Aorta (tissue), 5 donors: ENCODE measurements at regions of chr6 and their contacts with region 1.

Region 1: DNA sequence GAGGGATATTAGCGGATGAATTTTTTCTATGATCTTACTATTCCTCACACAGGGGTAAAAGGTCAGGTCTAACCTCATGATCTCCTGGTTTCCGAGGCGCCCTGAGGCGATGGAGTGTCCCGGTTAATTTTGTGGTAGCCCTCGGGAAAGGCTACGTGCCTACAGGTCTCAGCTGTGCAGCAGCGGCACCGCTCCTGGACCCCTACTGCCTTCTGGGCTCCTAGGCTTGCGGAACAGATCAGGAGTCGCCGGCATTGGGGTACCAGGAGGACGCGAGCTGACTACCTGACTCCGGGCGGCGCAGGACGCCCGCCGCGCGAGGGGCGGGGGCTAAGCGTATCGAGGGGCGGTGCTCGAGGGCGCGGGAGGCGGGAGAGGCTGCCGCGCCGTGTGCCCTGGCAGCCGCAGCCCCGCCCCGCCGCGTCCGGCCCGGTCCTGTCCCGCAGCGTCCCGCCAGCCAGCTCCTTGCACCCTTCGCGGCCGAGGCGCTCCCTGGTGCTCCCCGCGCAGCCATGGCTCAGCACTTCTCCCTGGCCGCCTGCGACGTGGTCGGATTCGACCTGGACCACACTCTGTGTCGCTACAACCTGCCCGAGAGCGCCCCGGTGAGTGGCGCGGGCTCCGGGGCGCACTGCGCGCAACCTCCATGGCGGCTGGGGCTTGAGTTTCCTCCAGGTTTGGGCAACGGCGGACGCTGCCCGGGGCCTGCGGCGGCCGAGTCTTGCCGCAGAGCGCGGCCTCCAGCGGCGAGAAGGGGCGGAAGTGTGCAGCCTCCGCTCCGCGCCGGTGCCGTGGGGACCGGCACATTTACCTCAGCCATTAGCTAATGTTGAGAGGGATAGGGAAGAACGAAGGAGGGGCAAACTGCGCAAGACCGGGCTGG is at the start of gene NT5DC1:
- DNase-seq: peak; percentile 91 to 95
- ATAC-seq: peak; percentile 96
- H3K4me3 ChIP-seq: peak within 1 kb of the TSS; percentile 74 to 92
- H3K27ac ChIP-seq: peak within 1 kb of the TSS; percentile 89 to 93
- H3K4me1 ChIP-seq: peaks cover 4 to 8% of the 10 kb centered on the region in 2 donors
- H3K27me3 ChIP-seq: no peaks in the 10 kb centered on the region
- total RNA-seq, gene NT5DC1: 42.9 to 47.5 TPM

Region 2: DNA sequence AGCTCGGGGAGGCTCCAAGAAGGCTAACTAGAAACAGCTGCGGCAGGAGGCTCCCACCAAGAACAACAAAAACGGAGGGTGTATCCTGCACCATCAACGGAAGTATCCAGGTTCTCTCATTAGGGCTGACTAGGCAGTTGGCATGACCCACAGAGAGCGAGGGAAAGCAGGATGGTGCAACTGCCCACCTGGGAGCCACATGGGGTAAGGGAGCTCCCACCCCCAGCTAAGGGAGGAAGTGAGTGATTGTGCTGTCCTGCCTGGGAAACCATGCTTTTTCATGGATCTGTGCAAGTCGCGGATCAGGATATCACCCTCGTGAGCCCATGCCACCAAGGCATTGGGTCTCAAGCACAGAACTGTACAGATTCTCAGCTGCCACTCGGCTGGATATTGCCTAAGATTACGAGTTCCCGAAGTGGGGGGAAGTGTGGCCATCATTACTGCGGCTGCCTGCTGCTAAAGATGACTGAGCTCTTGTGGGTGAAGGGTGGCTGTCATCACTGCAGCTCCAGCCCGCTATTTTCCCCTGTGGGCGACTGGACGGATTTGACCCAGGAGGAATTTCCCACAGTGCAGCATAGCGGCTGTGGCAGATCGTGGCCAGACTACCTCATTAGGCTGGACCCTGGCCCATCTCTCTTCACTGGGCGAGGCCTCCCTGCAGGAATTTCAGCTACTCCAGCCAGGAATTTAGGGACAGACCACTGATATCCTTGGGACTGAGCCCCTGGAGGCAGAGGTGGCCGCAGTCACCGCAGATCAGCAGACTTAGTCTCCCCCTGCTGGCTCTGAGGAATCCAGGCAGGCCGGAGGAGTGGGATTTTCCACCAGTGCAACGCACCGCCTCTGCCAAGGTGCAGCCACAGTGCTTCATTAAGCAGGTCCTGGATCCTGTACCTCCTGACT is 555.6 kb before region 1 on chr6:
- intact Hi-C with region 1: loop called in 1 of 2 experiments (anchors 10 kb)
- DNase-seq: peak; percentile 29 to 71
- ATAC-seq: peak; percentile 52
- H3K4me3 ChIP-seq: no peak overlapping the region
- H3K27ac ChIP-seq: no peak overlapping the region
- H3K4me1 ChIP-seq: no peaks in the 10 kb centered on the region
- H3K27me3 ChIP-seq: no peaks in the 10 kb centered on the region

Region 3: GRCh38 chr6:115932481-115932880 is 168.2 kb before region 1 on chr6:
- intact Hi-C with region 1: loop called (anchors 10 kb)
- DNase-seq: no peak
- ATAC-seq: no peak
- H3K4me3 ChIP-seq: no peak overlapping the region
- H3K27ac ChIP-seq: peak overlapping the region; percentile 88 to 99
- H3K4me1 ChIP-seq: peaks cover 0 to 3% of the 10 kb centered on the region in 2 donors
- H3K27me3 ChIP-seq: no peaks in the 10 kb centered on the region

Region 4: GRCh38 chr6:116010790-116011401 is 89.8 kb before region 1 on chr6:
- intact Hi-C with region 1: loop called (anchors 1 to 2 kb)
- DNase-seq: peak; percentile 79 to 85
- ATAC-seq: peak; percentile 81
- H3K4me3 ChIP-seq: no peak overlapping the region
- H3K27ac ChIP-seq: no peak overlapping the region
- H3K4me1 ChIP-seq: peaks cover 2 to 17% of the 10 kb centered on the region in 2 donors
- H3K27me3 ChIP-seq: no peaks in the 10 kb centered on the region

Region 5: GRCh38 chr6:116392132-116393013 is 291.7 kb after region 1 on chr6:
- intact Hi-C with region 1: no loop called
- DNase-seq: no peak
- ATAC-seq: no peak
- H3K4me3 ChIP-seq: no peak overlapping the region
- H3K27ac ChIP-seq: peak overlapping the region in 1 of 2 donors; percentile 44
- H3K4me1 ChIP-seq: no peaks in the 10 kb centered on the region
- H3K27me3 ChIP-seq: no peaks in the 10 kb centered on the region